GM12878 (cell line): ENCODE measurements at regions of chr20 and their contacts with region 1.

Region 1: DNA sequence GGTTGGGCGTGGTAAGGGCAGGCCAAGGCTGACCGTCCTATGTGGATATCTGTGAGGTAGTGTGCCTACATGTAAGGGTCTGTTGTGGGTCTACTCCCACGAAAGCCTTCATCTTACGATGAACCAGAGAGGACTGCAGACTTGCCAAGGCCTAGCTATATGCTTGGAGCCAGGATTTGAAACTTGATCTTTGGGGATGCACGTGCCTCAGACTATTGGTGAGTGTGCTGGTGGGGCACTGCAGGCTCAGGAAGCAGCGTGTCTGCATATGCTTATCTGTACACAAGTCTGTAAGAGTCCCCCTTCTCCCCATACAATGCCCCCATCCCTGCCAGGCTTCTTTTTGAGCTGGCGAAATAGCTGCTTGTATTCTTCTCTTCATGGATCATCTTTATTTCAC is 17.9 kb downstream of the PLCG1 start:
- DNase-seq: no peak
- ATAC-seq: no peak
- H3K4me3 ChIP-seq: no peak overlapping the region
- H3K27ac ChIP-seq: no peak overlapping the region
- H3K4me1 ChIP-seq: peaks cover 54% of the 10 kb centered on the region
- H3K27me3 ChIP-seq: no peaks in the 10 kb centered on the region
- CTCF ChIP-seq: no peak
- EP300 ChIP-seq: no peak
- POLR2A ChIP-seq: no peak
- RAD21 ChIP-seq: no peak

Region 2: GRCh38 chr20:40945754-40946450 is 209.4 kb before region 1 on chr20:
- CTCF ChIA-PET with region 1: no interaction called
- POLR2A ChIA-PET with region 1: no interaction called
- RAD21 ChIA-PET with region 1: no interaction called
- SMC1A ChIA-PET with region 1: no interaction called
- in situ Hi-C with region 1: no loop called
- intact Hi-C with region 1: no loop called
- DNase-seq: no peak
- ATAC-seq: peak; percentile 78
- H3K4me3 ChIP-seq: no peak overlapping the region
- H3K27ac ChIP-seq: no peak overlapping the region
- H3K4me1 ChIP-seq: peaks cover 14% of the 10 kb centered on the region
- H3K27me3 ChIP-seq: no peaks in the 10 kb centered on the region
- CTCF ChIP-seq: peak; percentile 52 to 63 (median 60); a peak in 5 of 6 replicates
- EP300 ChIP-seq: no peak
- POLR2A ChIP-seq: no peak
- RAD21 ChIP-seq: peak; percentile 70

Region 3: DNA sequence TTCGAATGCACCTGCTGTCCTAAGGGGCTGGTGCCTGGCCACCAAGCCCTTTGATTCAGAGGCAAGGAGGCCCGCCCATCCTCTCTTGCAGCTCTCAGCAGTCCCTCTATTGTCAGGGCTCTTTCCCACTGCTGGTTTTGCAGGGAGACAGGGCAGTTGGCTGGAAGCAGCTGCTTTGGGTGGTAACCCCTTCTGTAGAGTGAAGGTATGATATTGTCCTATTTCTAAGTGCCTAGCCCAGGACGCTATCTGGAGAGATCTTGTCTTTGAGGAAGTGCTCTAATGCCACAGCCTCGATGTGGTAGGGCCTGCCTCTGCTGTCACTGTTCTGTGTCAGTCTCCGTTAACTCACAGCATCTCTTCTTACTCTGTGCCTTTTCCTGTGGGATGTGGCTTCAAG is 12.3 kb before region 1 on chr20:
- CTCF ChIA-PET with region 1: interaction called, 75 read pairs
- POLR2A ChIA-PET with region 1: interaction called, 84 read pairs
- RAD21 ChIA-PET with region 1: interaction called, 42 read pairs
- SMC1A ChIA-PET with region 1: interaction called, 71 read pairs
- in situ Hi-C with region 1: no loop called
- intact Hi-C with region 1: no loop called
- DNase-seq: no peak
- ATAC-seq: peak; percentile 41
- H3K4me3 ChIP-seq: 0 out of 2 replicates have a peak overlapping the region, but pooled peaks have one; percentile 26
- H3K27ac ChIP-seq: no peak overlapping the region
- H3K4me1 ChIP-seq: peaks cover 50% of the 10 kb centered on the region
- H3K27me3 ChIP-seq: no peaks in the 10 kb centered on the region
- CTCF ChIP-seq: no peak
- EP300 ChIP-seq: no peak
- POLR2A ChIP-seq: no peak
- RAD21 ChIP-seq: no peak

Region 4: DNA sequence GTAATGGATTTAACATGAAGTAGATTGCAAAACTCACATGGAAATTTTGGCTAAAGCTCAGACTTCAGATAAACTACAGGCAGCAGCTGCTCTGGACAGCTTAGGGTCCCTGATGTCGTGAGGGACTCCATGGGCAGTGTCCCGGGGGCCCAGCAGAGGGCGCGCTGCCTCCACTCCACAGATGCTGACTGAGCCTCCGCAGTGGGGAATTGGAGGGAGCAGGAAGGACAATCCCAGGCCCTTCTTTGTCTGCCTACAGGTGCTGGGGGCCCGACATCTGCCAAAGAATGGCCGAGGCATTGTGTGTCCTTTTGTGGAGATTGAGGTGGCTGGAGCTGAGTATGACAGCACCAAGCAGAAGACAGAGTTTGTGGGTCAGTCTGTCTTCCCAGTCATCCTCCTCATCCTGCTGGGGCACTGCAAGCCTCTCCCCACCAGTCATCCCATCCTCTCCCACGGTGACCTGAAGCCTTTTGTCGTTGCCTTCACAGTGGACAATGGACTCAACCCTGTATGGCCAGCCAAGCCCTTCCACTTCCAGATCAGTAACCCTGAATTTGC is 18.0 kb after region 1 on chr20:
- CTCF ChIA-PET with region 1: interaction called, 27 read pairs
- POLR2A ChIA-PET with region 1: no interaction called
- RAD21 ChIA-PET with region 1: interaction called, 9 read pairs
- SMC1A ChIA-PET with region 1: interaction called, 13 read pairs
- in situ Hi-C with region 1: no loop called
- intact Hi-C with region 1: no loop called
- DNase-seq: no peak
- ATAC-seq: peak; percentile 97
- H3K4me3 ChIP-seq: no peak overlapping the region
- H3K27ac ChIP-seq: no peak overlapping the region
- H3K4me1 ChIP-seq: no peaks in the 10 kb centered on the region
- H3K27me3 ChIP-seq: no peaks in the 10 kb centered on the region
- CTCF ChIP-seq: peak; percentile 87 to 94 (median 92)
- EP300 ChIP-seq: no peak
- POLR2A ChIP-seq: no peak
- RAD21 ChIP-seq: peak; percentile 90